ENCODE measurements at regions of chr15 and their contacts with region 1.

Region 1: DNA sequence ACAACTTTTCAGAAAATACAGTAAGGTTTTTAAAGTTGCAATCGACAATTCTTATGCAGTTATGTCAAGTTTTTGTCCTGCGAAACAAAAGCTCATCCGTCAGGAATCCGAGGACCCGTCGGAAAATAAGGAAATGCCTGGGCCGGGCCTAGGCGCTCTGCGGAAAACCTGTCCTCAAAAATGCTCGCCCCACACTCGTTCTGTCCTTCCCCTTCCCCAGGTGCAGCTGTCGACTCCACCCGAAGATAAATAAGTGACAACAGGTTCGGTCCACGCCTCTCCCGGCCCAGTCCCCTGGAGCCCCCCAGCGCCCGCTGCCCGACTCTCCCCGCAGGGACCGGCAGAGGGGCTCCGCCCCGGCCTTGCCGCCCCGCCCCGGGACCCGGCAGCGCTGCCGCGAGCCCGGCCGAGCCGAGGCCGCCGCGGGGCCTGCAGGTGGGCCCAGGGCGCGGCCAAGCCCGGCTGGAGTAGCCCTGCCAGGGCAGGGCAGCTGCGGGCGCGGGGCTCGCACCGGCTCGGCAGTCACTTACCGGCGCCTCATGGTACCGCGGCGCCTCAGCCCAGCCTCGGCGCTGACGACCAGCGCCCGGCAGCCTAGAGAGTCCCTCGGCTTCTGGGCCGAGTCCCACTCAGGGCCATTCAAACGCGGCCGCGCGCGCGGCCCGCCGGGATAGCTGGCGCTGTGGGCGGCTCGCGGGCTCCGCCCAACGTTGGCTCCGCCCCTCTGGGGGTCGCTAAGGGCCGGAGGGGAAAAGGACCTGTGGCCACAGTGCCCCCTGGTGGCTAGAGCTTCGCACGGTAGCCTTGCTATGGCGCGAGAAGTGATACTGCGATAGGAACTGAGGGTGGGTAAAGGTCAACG is at the start of gene KATNBL1:
- DNase-seq: peak; percentile 93
- H3K4me3 ChIP-seq: peak within 1 kb of the TSS; percentile 96 to 100 (median 99)
- H3K27ac ChIP-seq: peak within 1 kb of the TSS; percentile 88
- H3K4me1 ChIP-seq: peaks cover 7% of the 10 kb centered on the region
- H3K27me3 ChIP-seq: no peaks in the 10 kb centered on the region
- CTCF ChIP-seq: peak; percentile 93 to 94
- POLR2A ChIP-seq: peak; percentile 94
- total RNA-seq, gene KATNBL1: 56.8 and 57.9 TPM in 2 replicates

Region 2: GRCh38 chr15:34064438-34064837 is 145.2 kb before region 1 on chr15:
- CTCF ChIA-PET with region 1: interaction called, 67 read pairs
- POLR2A ChIA-PET with region 1: no interaction called
- dilution Hi-C with region 1: no loop called
- intact Hi-C with region 1: loop called (anchors 1 kb)
- DNase-seq: no peak
- H3K4me3 ChIP-seq: no peak overlapping the region
- H3K27ac ChIP-seq: no peak overlapping the region
- H3K4me1 ChIP-seq: no peaks in the 10 kb centered on the region
- H3K27me3 ChIP-seq: no peaks in the 10 kb centered on the region
- CTCF ChIP-seq: no peak
- POLR2A ChIP-seq: no peak

Region 3: DNA sequence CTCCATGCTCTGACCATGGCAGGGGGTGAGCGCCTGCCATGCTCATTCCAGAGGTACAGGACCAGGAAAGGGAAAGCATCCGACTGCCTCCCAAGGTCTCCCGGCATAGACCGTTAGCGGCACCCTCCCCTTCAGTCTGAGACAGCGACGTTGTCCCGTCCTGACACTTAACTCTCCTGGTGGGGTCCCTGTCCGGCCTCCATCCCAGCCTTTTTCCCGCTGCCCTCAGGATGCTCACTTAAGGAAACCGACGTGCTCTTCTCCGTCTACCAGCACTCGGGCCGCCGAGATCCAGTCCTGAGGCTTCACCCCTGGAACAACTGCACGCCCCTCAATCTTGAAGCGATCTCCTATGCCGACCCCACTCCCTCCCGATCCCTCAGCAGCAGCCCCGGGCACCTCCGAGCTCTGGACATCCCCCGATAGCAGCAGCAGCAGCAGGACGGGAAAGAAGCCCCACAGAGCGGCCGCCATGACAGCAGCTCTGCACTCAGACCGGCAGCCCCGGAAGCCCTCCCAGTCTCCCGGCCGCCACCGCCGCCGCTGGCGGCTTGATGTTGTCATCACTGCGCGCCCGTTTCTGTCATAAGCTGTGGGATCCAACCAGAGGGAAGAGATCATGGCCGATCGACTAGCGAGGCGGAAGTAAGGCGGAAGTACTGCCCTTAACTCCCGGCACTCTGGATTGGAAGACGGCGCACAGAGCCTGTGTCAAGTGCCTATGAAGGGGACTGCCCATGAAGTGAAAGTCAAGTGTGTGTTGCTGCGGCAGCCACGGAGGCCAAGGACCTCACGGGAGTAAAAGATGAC is 108.1 kb before region 1 on chr15 and contains the starts of genes EMC7 and PGBD4:
- CTCF ChIA-PET with region 1: interaction called, 25 read pairs
- POLR2A ChIA-PET with region 1: interaction called, 5 read pairs
- dilution Hi-C with region 1: no loop called
- intact Hi-C with region 1: no loop called
- DNase-seq: peak; percentile 99
- H3K4me3 ChIP-seq: peak within 1 kb of the TSS; percentile 66 to 90 (median 66)
- H3K27ac ChIP-seq: peak within 1 kb of the TSS; percentile 78
- H3K4me1 ChIP-seq: peaks cover 17% of the 10 kb centered on the region
- H3K27me3 ChIP-seq: no peaks in the 10 kb centered on the region
- CTCF ChIP-seq: no peak
- POLR2A ChIP-seq: peak; percentile 85
- total RNA-seq, gene EMC7: 69.9 and 70.6 TPM in 2 replicates
- total RNA-seq, gene PGBD4: 1.1 TPM in 2 replicates

Region 4: GRCh38 chr15:34122771-34123183 is 86.9 kb before region 1 on chr15:
- CTCF ChIA-PET with region 1: interaction called, 25 read pairs
- POLR2A ChIA-PET with region 1: no interaction called
- dilution Hi-C with region 1: no loop called
- intact Hi-C with region 1: no loop called
- DNase-seq: peak; percentile 87
- H3K4me3 ChIP-seq: no peak overlapping the region
- H3K27ac ChIP-seq: peak overlapping the region; percentile 85
- H3K4me1 ChIP-seq: peaks cover 16% of the 10 kb centered on the region
- H3K27me3 ChIP-seq: no peaks in the 10 kb centered on the region
- CTCF ChIP-seq: no peak
- POLR2A ChIP-seq: no peak

Region 5: DNA sequence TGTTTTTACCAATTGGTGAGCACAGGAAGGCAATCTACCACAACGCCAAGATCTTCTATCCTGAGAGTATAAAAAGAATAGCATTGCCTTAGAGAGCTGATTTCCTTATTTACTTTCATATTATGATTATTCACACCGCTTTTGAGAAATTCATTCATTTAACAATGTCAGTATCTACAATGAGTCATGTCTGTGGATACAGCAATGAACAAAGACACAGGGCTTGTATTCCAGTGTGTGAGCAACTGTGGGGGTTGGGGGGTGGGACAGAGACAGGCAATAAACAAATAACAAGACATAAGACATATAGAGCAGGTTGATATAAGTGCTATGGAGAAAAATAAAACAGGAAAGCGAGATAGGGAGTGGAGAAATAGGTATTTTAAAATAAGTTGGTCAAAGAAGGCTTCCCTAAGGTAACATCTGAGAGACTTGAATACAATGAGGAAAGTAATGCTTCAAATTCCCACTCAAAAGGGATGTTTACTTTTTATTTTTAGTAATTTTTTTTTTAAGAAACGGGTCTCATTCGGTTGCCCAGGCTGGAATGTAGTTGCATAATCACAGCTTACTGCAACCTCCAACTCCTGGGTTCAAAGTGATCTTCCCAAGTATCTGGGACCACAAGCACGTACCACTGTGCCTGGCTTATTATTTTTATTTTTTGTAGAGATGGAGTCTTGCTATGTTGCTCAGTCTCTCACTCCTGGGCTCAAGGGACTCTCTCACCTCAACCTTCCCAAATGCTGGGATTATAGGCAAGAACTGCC is 62.1 kb before region 1 on chr15:
- CTCF ChIA-PET with region 1: interaction called, 5 read pairs
- POLR2A ChIA-PET with region 1: no interaction called
- dilution Hi-C with region 1: no loop called
- intact Hi-C with region 1: loop called (anchors 2 kb)
- DNase-seq: peak; percentile 81
- H3K4me3 ChIP-seq: no peak overlapping the region
- H3K27ac ChIP-seq: peak overlapping the region; percentile 34
- H3K4me1 ChIP-seq: peaks cover 15% of the 10 kb centered on the region
- H3K27me3 ChIP-seq: no peaks in the 10 kb centered on the region
- CTCF ChIP-seq: no peak
- POLR2A ChIP-seq: no peak

Region 6: GRCh38 chr15:34241372-34242330 is 32.0 kb after region 1 on chr15:
- CTCF ChIA-PET with region 1: interaction called, 3 read pairs
- POLR2A ChIA-PET with region 1: no interaction called
- dilution Hi-C with region 1: no loop called
- intact Hi-C with region 1: loop called (anchors 2 kb)
- DNase-seq: peak; percentile 67
- H3K4me3 ChIP-seq: no peak overlapping the region
- H3K27ac ChIP-seq: no peak overlapping the region
- H3K4me1 ChIP-seq: peaks cover 21% of the 10 kb centered on the region
- H3K27me3 ChIP-seq: no peaks in the 10 kb centered on the region
- CTCF ChIP-seq: peak; percentile 47 to 51
- POLR2A ChIP-seq: no peak